ENCODE measurements at regions of chr2 and their contacts with region 1.

Region 1: GRCh38 chr2:231674587-231675338 is 33.6 kb upstream of the PTMA start:
- DNase-seq: peak; percentile 99
- H3K4me3 ChIP-seq: peak overlapping the region; percentile 78
- H3K27ac ChIP-seq: peak overlapping the region; percentile 99
- H3K4me1 ChIP-seq: peaks cover 84% of the 10 kb centered on the region
- CTCF ChIP-seq: peak; percentile 94

Region 2: GRCh38 chr2:231463698-231464575 is 210.8 kb before region 1 on chr2 and contains the start of gene NCL:
- CTCF ChIA-PET with region 1: no interaction called
- POLR2A ChIA-PET with region 1: no interaction called
- intact Hi-C with region 1: loop called (anchors 10 kb)
- DNase-seq: peak; percentile 92
- H3K4me3 ChIP-seq: peak within 1 kb of the TSS; percentile 94
- H3K27ac ChIP-seq: peak within 1 kb of the TSS; percentile 88
- H3K4me1 ChIP-seq: peaks cover 28% of the 10 kb centered on the region
- CTCF ChIP-seq: no peak
- total RNA-seq, gene NCL: 255 and 413 TPM in 2 replicates

Region 3: GRCh38 chr2:231612179-231613053 is 62.3 kb before region 1 on chr2:
- CTCF ChIA-PET with region 1: interaction called, 136 read pairs
- POLR2A ChIA-PET with region 1: interaction called, 201 read pairs
- intact Hi-C with region 1: loop called (anchors 1 kb)
- DNase-seq: peak; percentile 91
- H3K4me3 ChIP-seq: peak overlapping the region; percentile 60
- H3K27ac ChIP-seq: peak overlapping the region; percentile 99
- H3K4me1 ChIP-seq: peaks cover 73% of the 10 kb centered on the region
- CTCF ChIP-seq: peak; percentile 98

Region 4: DNA sequence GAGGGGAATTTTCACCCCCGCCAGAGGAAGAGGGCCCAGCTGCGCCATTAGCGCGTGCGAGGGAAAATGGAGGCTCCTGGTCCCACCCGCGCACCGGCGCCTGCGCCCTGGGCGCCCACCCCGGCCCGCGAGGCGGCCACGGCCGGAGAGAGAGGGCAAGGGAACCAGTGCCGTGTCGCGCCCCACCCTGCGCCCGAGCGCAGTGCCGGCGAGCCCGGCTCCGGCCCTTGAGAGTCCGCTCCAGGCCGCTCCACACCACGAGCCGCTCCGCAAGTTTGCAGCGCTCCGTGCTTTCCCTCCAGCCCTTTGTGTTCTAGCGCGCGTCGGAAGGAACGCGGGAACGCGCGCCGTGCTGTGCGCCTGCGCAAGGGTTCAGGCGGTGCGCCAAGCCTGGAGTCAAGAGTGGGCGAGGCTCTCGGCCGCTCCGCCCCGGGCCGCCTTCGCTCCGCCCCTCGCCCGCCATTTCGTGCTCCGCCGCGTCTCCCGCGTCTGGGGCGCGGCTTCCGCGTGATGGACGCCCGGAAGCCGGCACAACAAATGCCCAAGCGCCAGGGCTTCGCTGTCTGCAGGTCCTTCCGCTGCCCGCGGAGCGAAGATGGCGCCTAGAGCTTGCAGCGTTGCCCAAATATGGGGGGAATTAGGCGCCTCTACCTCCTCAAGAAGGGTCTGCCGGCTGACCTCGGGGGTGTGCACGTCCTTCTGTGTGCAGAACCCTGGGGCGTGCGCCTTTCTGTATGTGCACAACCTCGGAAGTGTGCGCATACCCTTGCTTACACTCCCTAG is 12.5 kb before region 1 on chr2:
- CTCF ChIA-PET with region 1: interaction called, 6 read pairs
- POLR2A ChIA-PET with region 1: interaction called, 38 read pairs
- intact Hi-C with region 1: loop called (anchors 1 kb)
- DNase-seq: peak; percentile 99
- H3K4me3 ChIP-seq: peak overlapping the region; percentile 63
- H3K27ac ChIP-seq: peak overlapping the region; percentile 73
- H3K4me1 ChIP-seq: peaks cover 63% of the 10 kb centered on the region
- CTCF ChIP-seq: no peak

Region 5: GRCh38 chr2:231706731-231707624 is 32.2 kb after region 1 on chr2:
- CTCF ChIA-PET with region 1: interaction called, 6 read pairs
- POLR2A ChIA-PET with region 1: interaction called, 27 read pairs
- intact Hi-C with region 1: loop called (anchors 1 kb)
- DNase-seq: peak; percentile 99
- H3K4me3 ChIP-seq: peak overlapping the region; percentile 93
- H3K27ac ChIP-seq: peak overlapping the region; percentile 95
- H3K4me1 ChIP-seq: peaks cover 29% of the 10 kb centered on the region
- CTCF ChIP-seq: peak; percentile 95

Region 6: GRCh38 chr2:231786177-231786916 is 111.6 kb after region 1 on chr2 and contains the start of gene COPS7B:
- CTCF ChIA-PET with region 1: interaction called, 3 read pairs
- POLR2A ChIA-PET with region 1: interaction called, 4 read pairs
- intact Hi-C with region 1: loop called (anchors 1 kb)
- DNase-seq: peak; percentile 88
- H3K4me3 ChIP-seq: peak within 1 kb of the TSS; percentile 99
- H3K27ac ChIP-seq: peak within 1 kb of the TSS; percentile 45
- H3K4me1 ChIP-seq: peaks cover 42% of the 10 kb centered on the region
- CTCF ChIP-seq: peak; percentile 81
- total RNA-seq, gene COPS7B: 50.6 and 55.5 TPM in 2 replicates

Measured in OCI-LY7 (cell line).